Prostate gland (tissue), 2 donors: ENCODE measurements at regions of chr3 and their contacts with region 1.

Region 1: DNA sequence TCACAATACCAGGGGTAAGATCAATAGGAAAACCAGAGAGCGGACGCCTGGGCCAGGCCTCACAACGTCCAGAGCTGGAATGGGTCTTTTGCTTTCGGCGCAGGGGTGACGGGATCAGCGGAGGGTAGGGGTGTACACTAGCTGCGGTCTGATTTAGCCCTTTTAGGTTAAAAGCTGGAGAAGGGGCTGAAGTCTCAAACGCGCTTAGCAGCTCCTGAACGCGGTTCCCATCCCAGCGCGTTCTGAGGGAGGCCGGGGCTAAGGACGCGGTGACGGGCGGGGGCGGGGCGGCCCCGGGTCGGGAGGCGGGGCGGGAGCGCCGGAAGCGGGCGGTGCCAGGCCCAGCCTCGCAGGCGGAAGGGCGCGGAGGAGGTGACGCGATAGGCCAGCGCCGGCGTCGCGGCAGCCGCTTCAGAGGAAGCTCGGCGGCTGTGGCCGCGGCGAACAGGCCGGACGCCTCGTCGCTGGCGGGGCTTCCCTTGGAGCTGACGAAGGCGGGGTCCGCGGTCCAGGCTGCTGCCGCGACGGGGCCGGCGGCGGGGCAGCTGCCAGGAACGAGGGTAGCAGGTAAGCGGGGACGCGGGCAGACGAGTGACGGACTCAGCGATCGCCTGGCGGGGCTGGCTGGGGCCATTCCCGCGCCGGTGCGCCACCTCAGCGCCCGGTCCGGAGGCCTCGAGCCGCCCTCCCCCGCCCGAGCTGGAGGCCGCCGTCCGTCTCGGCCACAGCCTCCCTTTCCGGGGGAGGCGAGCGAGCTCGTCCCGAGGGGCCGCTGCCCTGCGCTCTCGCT is at the start of gene SENP5:
- DNase-seq: peak; percentile 89
- H3K4me3 ChIP-seq: peak within 1 kb of the TSS; percentile 91 to 100
- H3K27ac ChIP-seq: peak within 1 kb of the TSS; percentile 83 to 91
- H3K4me1 ChIP-seq: peaks cover 8% of the 10 kb centered on the region
- H3K27me3 ChIP-seq: no peaks in the 10 kb centered on the region
- CTCF ChIP-seq: peak in 2 of 4 experiments; percentile 4 to 16
- POLR2A ChIP-seq: peak; percentile 85
- total RNA-seq, gene SENP5: 28.3 to 62.9 TPM

Region 2: DNA sequence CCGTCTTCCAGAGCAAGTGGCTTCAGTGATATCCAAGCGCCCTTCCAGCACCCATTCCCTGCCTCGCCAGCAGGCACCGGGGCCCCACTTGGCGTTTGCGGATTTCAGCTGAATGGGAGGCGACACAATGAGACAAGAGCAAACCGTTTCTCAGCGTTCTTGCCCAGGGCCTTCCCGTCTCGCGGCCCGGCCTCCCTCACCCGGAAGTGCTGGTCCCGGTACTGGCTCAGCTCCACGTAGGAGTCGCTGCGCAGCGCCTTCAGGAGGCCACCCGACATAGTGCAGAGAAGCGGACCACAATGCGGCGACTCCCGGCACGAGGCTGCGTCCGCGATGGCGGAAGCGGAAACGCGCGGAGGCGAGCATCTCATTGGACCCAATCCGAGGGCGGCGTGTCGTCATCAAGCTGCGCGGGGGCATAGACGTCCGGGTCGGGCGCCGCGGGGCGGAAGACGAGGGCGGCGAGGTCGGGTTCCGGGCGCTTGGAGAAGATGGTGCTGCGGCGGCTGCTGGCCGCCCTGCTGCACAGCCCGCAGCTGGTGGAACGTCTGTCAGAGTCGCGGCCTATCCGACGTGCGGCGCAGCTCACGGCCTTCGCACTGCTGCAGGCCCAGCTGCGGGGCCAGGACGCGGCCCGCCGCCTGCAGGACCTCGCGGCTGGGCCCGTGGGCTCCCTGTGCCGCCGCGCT is 74.7 kb after region 1 on chr3 and contains the start of gene NCBP2:
- intact Hi-C with region 1: loop called (anchors 5 kb)
- DNase-seq: peak; percentile 96
- H3K4me3 ChIP-seq: peak within 1 kb of the TSS; percentile 90 to 100
- H3K27ac ChIP-seq: peak within 1 kb of the TSS; percentile 87 to 89
- H3K4me1 ChIP-seq: peaks cover 8% of the 10 kb centered on the region
- H3K27me3 ChIP-seq: no peaks in the 10 kb centered on the region
- CTCF ChIP-seq: peak; percentile 12 to 81 (median 50)
- POLR2A ChIP-seq: peak; percentile 47
- total RNA-seq, gene NCBP2: 35.4 to 38.2 TPM